ENCODE measurements at regions of chr1 and their contacts with region 1.

Region 1: GRCh38 chr1:19240673-19241538 is 10.4 kb downstream of the EMC1 start:
- DNase-seq: peak; percentile 71
- ATAC-seq: peak; percentile 90
- H3K4me3 ChIP-seq: no peak overlapping the region
- H3K27ac ChIP-seq: no peak overlapping the region
- H3K4me1 ChIP-seq: no peaks in the 10 kb centered on the region
- H3K27me3 ChIP-seq: no peaks in the 10 kb centered on the region
- CTCF ChIP-seq: peak; percentile 87

Region 2: GRCh38 chr1:19179597-19180264 is 61.2 kb before region 1 on chr1:
- CTCF ChIA-PET with region 1: interaction called, 7 read pairs
- POLR2A ChIA-PET with region 1: no interaction called
- intact Hi-C with region 1: loop called (anchors 1 kb)
- DNase-seq: peak; percentile 39
- ATAC-seq: peak; percentile 68
- H3K4me3 ChIP-seq: no peak overlapping the region
- H3K27ac ChIP-seq: no peak overlapping the region
- H3K4me1 ChIP-seq: no peaks in the 10 kb centered on the region
- H3K27me3 ChIP-seq: no peaks in the 10 kb centered on the region
- CTCF ChIP-seq: peak; percentile 57

Region 3: GRCh38 chr1:19547814-19548213 is 306.9 kb after region 1 on chr1:
- CTCF ChIA-PET with region 1: no interaction called
- POLR2A ChIA-PET with region 1: no interaction called
- intact Hi-C with region 1: no loop called
- DNase-seq: peak; percentile 21
- ATAC-seq: peak; percentile 67
- H3K4me3 ChIP-seq: no peak overlapping the region
- H3K27ac ChIP-seq: no peak overlapping the region
- H3K4me1 ChIP-seq: no peaks in the 10 kb centered on the region
- H3K27me3 ChIP-seq: no peaks in the 10 kb centered on the region
- CTCF ChIP-seq: no peak

Measured in PC-3 (cell line).